CD4-positive, alpha-beta T cell (primary cell): ENCODE measurements at regions of chr17 and their contacts with region 1.

Region 1: DNA sequence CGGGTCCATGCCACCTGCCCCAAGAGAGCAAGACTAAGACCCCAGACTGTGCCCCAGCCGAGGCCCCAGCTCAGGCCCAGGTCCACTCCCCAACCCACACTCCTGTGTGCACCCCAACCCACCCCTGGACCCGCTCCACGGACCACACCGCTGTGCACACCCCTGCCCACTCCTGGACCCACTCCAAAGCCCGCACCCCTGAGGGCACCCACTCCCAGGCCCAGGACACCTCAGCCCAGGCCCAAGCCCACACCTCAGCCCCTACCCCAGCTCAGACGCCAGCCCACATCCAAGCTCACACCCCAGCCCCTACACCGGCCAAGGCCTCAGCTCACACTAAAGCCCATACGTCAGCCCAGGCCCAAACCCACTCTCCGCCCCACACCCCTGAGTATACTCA is 1.1 kb downstream of the SPEM3 start:
- DNase-seq: no peak
- ATAC-seq: no peak
- H3K4me3 ChIP-seq: no peak overlapping the region
- H3K4me3 Mint-ChIP-seq: no peak overlapping the region
- H3K27ac ChIP-seq: no peak overlapping the region
- H3K27ac Mint-ChIP-seq: no peak overlapping the region
- H3K4me1 ChIP-seq: no peaks in the 10 kb centered on the region
- H3K4me1 Mint-ChIP-seq: no peaks in the 10 kb centered on the region
- H3K27me3 ChIP-seq: no peaks in the 10 kb centered on the region
- H3K27me3 Mint-ChIP-seq: no peaks in the 10 kb centered on the region
- CTCF ChIP-seq: no peak

Region 2: GRCh38 chr17:7219812-7220581 is 209.7 kb before region 1 on chr17 and contains the starts of genes ACADVL and DLG4:
- CTCF ChIA-PET with region 1: no interaction called
- POLR2A ChIA-PET with region 1: no interaction called
- intact Hi-C with region 1: no loop called
- DNase-seq: peak; percentile 53 to 86 (median 74)
- ATAC-seq: peak; percentile 50
- H3K4me3 ChIP-seq: peak within 1 kb of the TSS; percentile 70
- H3K4me3 Mint-ChIP-seq: peak within 1 kb of the TSS; percentile 95
- H3K27ac ChIP-seq: peak within 1 kb of the TSS; percentile 75 to 79
- H3K27ac Mint-ChIP-seq: peak within 1 kb of the TSS; percentile 76
- H3K4me1 ChIP-seq: peaks cover 61% of the 10 kb centered on the region
- H3K4me1 Mint-ChIP-seq: peaks cover 54% of the 10 kb centered on the region
- H3K27me3 ChIP-seq: no peaks in the 10 kb centered on the region
- H3K27me3 Mint-ChIP-seq: no peaks in the 10 kb centered on the region
- CTCF ChIP-seq: no peak
- total RNA-seq, gene ACADVL: 237 to 257 TPM
- total RNA-seq, gene DLG4: 10.2 to 11.0 TPM

Region 3: GRCh38 chr17:7394452-7395191 is 35.1 kb before region 1 on chr17 and contains the start of gene PLSCR3:
- CTCF ChIA-PET with region 1: no interaction called
- POLR2A ChIA-PET with region 1: interaction called, 10 read pairs
- intact Hi-C with region 1: loop called (anchors 5 to 10 kb)
- DNase-seq: peak; percentile 56 to 90 (median 80)
- ATAC-seq: peak; percentile 87
- H3K4me3 ChIP-seq: peak within 1 kb of the TSS; percentile 82
- H3K4me3 Mint-ChIP-seq: peak within 1 kb of the TSS; percentile 96
- H3K27ac ChIP-seq: peak within 1 kb of the TSS; percentile 68 to 79
- H3K27ac Mint-ChIP-seq: peak within 1 kb of the TSS; percentile 94
- H3K4me1 ChIP-seq: peaks cover 48% of the 10 kb centered on the region
- H3K4me1 Mint-ChIP-seq: peaks cover 37% of the 10 kb centered on the region
- H3K27me3 ChIP-seq: no peaks in the 10 kb centered on the region
- H3K27me3 Mint-ChIP-seq: no peaks in the 10 kb centered on the region
- CTCF ChIP-seq: peak; percentile 20
- total RNA-seq, gene PLSCR3: 66.3 to 70.3 TPM

Region 4: DNA sequence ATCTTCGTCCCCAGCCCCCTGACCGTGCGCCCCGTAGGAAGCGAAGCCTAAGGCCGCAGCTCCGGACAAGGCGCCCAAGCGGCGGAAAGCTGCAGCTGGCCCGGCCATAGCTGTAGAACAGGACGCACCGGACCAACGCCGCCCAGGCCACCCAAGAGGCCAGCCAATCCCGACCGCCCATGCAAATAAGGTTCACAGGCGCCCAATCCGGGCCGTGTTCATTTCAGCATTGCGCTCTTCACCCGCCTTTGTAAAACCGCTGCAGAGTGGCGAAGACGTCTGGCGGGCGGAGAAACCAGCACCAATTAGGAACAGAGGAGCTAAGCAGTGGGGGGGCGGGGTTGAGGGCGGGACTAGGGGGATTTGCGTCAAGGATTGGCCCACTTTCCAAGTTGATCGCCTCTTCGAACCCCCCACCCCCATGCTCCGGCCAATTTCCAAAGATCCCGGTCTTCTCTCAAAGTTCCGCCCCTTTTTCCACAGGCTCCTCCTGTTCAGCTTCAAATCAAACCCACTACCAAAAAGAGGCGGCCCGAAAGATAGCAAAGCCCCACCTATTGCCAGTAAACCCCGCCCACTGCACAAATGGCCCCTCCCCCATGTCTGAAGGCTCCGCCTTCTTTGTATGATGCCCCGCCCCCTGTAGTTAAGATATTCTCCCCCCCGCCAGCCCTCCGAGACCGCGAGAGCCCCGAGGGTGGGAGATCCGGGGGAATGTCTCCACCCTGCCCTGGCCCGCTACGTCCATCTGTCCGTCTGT is 25.6 kb before region 1 on chr17 and contains the start of gene TMEM256:
- CTCF ChIA-PET with region 1: no interaction called
- POLR2A ChIA-PET with region 1: interaction called, 28 read pairs
- intact Hi-C with region 1: loop called (anchors 1 to 2 kb)
- DNase-seq: peak; percentile 90 to 99 (median 94)
- ATAC-seq: peak; percentile 88
- H3K4me3 ChIP-seq: peak within 1 kb of the TSS; percentile 77
- H3K4me3 Mint-ChIP-seq: peak within 1 kb of the TSS; percentile 98
- H3K27ac ChIP-seq: peak within 1 kb of the TSS in 1 of 2 donors; percentile 82
- H3K27ac Mint-ChIP-seq: peak within 1 kb of the TSS; percentile 87
- H3K4me1 ChIP-seq: peaks cover 36% of the 10 kb centered on the region
- H3K4me1 Mint-ChIP-seq: peaks cover 31% of the 10 kb centered on the region
- H3K27me3 ChIP-seq: peaks cover 0 to 5% of the 10 kb centered on the region in 2 experiments
- H3K27me3 Mint-ChIP-seq: no peaks in the 10 kb centered on the region
- CTCF ChIP-seq: no peak
- total RNA-seq, gene TMEM256: 29.0 to 29.4 TPM

Region 5: GRCh38 chr17:7538891-7539290 is 109.2 kb after region 1 on chr17:
- CTCF ChIA-PET with region 1: no interaction called
- POLR2A ChIA-PET with region 1: no interaction called
- intact Hi-C with region 1: no loop called
- DNase-seq: no peak
- ATAC-seq: no peak
- H3K4me3 ChIP-seq: no peak overlapping the region
- H3K4me3 Mint-ChIP-seq: no peak overlapping the region
- H3K27ac ChIP-seq: no peak overlapping the region
- H3K27ac Mint-ChIP-seq: no peak overlapping the region
- H3K4me1 ChIP-seq: no peaks in the 10 kb centered on the region
- H3K4me1 Mint-ChIP-seq: no peaks in the 10 kb centered on the region
- H3K27me3 ChIP-seq: no peaks in the 10 kb centered on the region
- H3K27me3 Mint-ChIP-seq: no peaks in the 10 kb centered on the region
- CTCF ChIP-seq: no peak